Adrenal gland (tissue), 19 donors: ENCODE measurements at regions of chr14 and their contacts with region 1.

Region 1: GRCh38 chr14:103889313-103890051 is 38.8 kb upstream of the TDRD9 start:
- DNase-seq: peak in 4 of 7 donors; percentile 57 to 69 (median 62)
- H3K4me3 ChIP-seq: no peak overlapping the region
- H3K27ac ChIP-seq: peak overlapping the region in 1 of 5 donors; percentile 45
- H3K4me1 ChIP-seq: peaks cover 5 to 12% of the 10 kb centered on the region in 2 donors
- H3K27me3 ChIP-seq: no peaks in the 10 kb centered on the region
- CTCF ChIP-seq: no peak
- POLR2A ChIP-seq: no peak

Region 2: GRCh38 chr14:103696466-103697071 is 192.9 kb before region 1 on chr14:
- intact Hi-C with region 1: no loop called
- DNase-seq: peak in 2 of 7 donors; percentile 34 to 65
- H3K4me3 ChIP-seq: no peak overlapping the region
- H3K27ac ChIP-seq: peak overlapping the region in 2 of 5 donors; percentile 30 to 57
- H3K4me1 ChIP-seq: peaks cover 14 to 38% of the 10 kb centered on the region in 2 donors
- H3K27me3 ChIP-seq: no peaks in the 10 kb centered on the region
- CTCF ChIP-seq: no peak
- POLR2A ChIP-seq: no peak

Region 3: DNA sequence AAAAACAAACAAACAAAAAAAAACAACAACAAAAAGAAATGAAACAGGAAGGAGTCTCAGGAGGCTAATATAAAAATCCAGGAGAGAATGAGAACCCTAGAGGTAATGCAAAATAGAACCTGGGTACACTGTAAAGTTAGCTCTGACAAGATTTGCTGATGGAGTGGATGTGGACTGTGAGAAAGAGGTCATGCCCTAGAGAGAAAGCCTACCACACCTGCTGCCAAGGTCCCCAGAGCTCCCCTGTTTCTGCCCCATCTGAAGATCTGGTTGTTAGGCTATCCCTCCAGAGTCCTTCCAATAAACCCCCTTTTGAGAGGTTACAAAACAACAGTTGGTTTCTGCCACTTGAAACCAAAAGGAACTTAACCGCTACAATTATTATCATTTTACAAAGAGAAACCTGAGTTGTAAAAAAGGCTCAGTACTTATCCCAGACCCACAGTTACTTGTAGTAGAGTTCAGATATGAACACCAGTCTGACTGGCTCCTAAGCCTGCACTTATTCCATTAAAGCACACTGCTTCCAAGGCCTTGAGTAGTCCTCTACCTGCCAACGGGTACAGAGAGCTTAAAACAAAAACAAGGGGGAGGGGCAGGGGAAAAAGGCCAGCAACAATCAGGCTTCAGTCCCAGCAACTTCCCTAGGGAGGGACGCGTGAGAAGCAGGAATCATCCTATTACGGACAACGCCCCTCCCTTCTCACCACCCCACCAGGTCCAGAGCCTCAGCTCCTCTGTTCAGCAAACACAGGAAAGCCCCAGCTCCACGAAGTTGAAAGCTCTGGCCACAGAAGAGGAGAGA is 69.8 kb before region 1 on chr14:
- intact Hi-C with region 1: loop called in 1 of 2 experiments (anchors 10 kb)
- DNase-seq: peak in 4 of 7 donors; percentile 53 to 62 (median 59)
- H3K4me3 ChIP-seq: peak overlapping the region in 1 of 4 donors; percentile 4
- H3K27ac ChIP-seq: peak overlapping the region in 3 of 5 donors; percentile 22 to 55 (median 53)
- H3K4me1 ChIP-seq: peaks cover 18 to 41% of the 10 kb centered on the region in 2 donors
- H3K27me3 ChIP-seq: no peaks in the 10 kb centered on the region
- CTCF ChIP-seq: no peak
- POLR2A ChIP-seq: no peak